ENCODE measurements at regions of chr16 and their contacts with region 1.

Region 1: GRCh38 chr16:26583803-26584202 is 482.9 kb upstream of the C16orf82 start:
- DNase-seq: no peak
- H3K4me3 ChIP-seq: no peak overlapping the region
- H3K27ac ChIP-seq: no peak overlapping the region
- H3K4me1 ChIP-seq: no peaks in the 10 kb centered on the region
- H3K27me3 ChIP-seq: no peaks in the 10 kb centered on the region
- CTCF ChIP-seq: no peak
- POLR2A ChIP-seq: no peak

Region 2: DNA sequence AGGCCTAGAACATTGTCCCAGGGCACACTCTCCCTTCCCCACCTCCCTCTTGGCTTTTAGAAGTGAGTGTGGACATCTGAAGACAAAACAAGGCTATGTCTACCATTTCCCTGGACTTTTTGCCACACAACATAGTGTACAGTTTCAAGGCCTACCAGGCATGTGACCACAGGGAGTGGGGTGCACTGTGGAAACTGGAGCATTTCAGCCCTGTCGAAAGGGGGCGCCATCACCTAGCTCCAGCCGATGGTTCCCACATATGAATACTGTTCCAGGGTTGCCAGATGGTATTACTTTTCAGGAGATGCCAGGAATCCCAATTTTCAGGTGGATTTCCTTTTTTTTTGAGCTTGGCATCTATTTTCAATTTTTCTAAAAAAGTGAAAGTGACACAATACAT is 1106.8 kb after region 1 on chr16:
- intact Hi-C with region 1: loop called (anchors 10 kb)
- DNase-seq: no peak
- H3K4me3 ChIP-seq: no peak overlapping the region
- H3K27ac ChIP-seq: no peak overlapping the region
- H3K4me1 ChIP-seq: no peaks in the 10 kb centered on the region
- H3K27me3 ChIP-seq: no peaks in the 10 kb centered on the region
- CTCF ChIP-seq: peak in 1 of 3 donors; percentile 48
- POLR2A ChIP-seq: no peak

Region 3: GRCh38 chr16:27822995-27823394 is 1239.2 kb after region 1 on chr16:
- intact Hi-C with region 1: no loop called
- DNase-seq: peak in 1 of 2 donors; percentile 17
- H3K4me3 ChIP-seq: no peak overlapping the region
- H3K27ac ChIP-seq: no peak overlapping the region
- H3K4me1 ChIP-seq: no peaks in the 10 kb centered on the region
- H3K27me3 ChIP-seq: peaks cover 0 to 4% of the 10 kb centered on the region in 2 donors
- CTCF ChIP-seq: no peak
- POLR2A ChIP-seq: no peak